ENCODE measurements at regions of chr19 and their contacts with region 1.

Region 1: GRCh38 chr19:38634757-38635482 is 12.5 kb upstream of the ACTN4 start:
- DNase-seq: peak; percentile 38
- H3K4me3 ChIP-seq: no peak overlapping the region
- H3K27ac ChIP-seq: peak overlapping the region; percentile 31
- H3K27me3 ChIP-seq: no peaks in the 10 kb centered on the region
- CTCF ChIP-seq: peak; percentile 94

Region 2: DNA sequence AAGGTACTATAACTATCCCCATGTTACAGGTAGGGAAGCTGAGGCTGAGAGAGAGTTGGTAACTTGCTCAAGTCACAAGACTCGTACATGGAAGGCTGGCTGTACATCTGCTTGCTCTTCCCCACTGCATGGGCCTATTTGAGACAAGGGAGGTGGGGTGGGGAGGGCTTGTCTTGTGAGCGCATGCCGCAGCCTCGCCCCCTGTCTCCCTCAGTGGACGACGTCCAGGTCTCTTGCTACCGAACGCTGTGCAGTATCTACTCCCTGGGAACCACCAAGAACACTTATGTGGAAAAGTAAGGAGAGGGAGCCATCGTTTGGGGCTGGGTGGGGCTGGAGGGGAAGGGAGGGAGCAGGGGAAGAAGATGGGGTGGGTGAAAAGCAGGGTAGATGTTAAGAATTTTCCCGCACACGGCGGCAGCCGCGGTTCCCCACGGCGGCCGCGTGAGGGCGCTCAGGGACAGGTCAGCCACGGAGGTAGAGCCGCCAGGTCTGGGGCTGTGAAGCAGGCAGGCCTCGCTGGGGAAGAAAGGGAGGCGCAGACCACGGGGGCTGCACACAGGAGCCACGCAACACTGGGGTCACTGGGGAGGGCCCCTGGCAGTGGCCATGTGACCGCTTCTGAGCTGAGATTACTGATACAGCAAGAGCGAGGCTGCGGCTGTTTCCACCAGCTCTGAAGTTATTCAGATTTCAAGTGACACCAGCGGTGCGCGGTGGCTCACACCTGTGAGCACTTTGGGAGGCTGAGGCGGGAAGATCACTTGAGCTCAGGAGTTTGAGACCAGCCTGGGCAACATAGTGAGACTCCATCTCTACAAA is 119.9 kb before region 1 on chr19:
- CTCF ChIA-PET with region 1: interaction called, 24 read pairs
- POLR2A ChIA-PET with region 1: interaction called, 10 read pairs
- DNase-seq: peak; percentile 2
- H3K4me3 ChIP-seq: no peak overlapping the region
- H3K27ac ChIP-seq: no peak overlapping the region
- H3K27me3 ChIP-seq: no peaks in the 10 kb centered on the region
- CTCF ChIP-seq: peak; percentile 83

Region 3: DNA sequence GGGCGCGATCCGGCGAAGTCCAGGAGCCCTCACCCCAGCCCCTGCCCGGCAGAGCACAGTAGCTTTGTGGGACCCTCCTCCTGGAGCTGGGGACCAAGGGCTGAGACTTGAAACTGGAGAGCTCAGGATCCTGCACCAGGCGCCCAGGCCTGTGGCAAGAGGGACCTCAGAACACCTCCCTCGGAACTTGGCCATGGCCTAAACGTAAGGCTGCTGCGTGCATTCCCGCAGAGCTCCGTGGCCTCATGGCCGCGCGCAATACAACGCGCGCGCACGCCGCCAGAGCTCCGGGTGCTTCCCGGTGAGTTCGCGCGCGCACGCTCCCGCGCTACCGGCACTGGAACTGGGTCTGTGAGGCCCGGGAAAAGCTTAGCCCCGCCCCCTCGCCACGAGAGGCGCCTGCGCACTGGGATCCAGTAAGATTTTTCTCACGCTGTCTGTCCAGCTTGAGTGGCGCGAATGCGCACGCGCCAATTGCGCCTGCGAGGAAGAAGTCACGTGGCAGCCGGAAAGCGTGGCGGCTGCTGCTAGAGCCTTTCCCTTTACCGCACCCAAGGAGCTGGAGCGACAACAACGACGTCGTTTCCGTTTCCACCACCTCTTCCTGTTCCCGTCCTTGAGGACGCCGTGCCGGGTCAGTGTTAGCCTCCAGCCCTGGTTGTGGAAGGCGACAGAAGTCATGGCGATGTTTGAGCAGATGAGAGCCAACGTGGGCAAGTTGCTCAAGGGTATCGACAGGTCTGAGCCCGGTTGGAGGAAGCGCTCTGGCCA is 16.1 kb before region 1 on chr19 and contains the start of gene EIF3K:
- CTCF ChIA-PET with region 1: interaction called, 19 read pairs
- POLR2A ChIA-PET with region 1: interaction called, 6 read pairs
- DNase-seq: peak; percentile 98
- H3K4me3 ChIP-seq: peak within 1 kb of the TSS; percentile 97
- H3K27ac ChIP-seq: peak within 1 kb of the TSS; percentile 43
- H3K27me3 ChIP-seq: no peaks in the 10 kb centered on the region
- CTCF ChIP-seq: no peak
- polyA plus RNA-seq, gene EIF3K: 168 and 250 TPM in 2 replicates

Region 4: DNA sequence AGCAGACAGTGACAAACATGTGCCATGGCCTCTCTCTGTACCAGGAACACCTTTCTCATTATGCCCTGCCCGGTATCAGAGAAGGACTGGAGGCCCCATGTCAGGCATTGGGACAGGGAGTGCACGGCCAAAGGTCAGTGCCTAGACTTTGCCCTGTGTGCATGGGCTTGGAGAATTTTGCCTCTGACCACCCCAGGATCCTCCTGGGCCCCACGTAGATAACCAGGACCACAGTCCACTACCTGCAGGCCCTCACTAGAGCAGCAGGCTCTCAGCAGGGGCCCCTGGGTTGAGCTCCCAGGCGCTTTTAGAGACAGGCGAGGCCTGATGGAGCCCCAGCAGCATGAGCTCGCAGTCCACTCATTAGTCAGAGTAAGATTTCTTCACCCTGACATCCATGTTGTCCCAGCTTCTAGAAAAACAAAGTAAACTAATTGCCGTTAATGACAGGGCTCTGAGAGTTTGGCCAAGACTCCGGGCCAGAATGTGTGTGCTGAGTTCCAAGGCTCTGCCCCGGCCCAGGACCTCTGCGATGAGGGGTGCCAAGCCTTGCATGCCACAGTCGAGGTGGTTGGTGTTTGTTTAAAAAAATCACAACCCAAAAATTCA is 66.6 kb after region 1 on chr19:
- CTCF ChIA-PET with region 1: no interaction called
- POLR2A ChIA-PET with region 1: no interaction called
- DNase-seq: no peak
- H3K4me3 ChIP-seq: no peak overlapping the region
- H3K27ac ChIP-seq: peak overlapping the region; percentile 57
- H3K27me3 ChIP-seq: no peaks in the 10 kb centered on the region
- CTCF ChIP-seq: no peak

Region 5: GRCh38 chr19:38711726-38712153 is 76.8 kb after region 1 on chr19:
- CTCF ChIA-PET with region 1: interaction called, 13 read pairs
- POLR2A ChIA-PET with region 1: no interaction called
- DNase-seq: peak; percentile 86
- H3K4me3 ChIP-seq: no peak overlapping the region
- H3K27ac ChIP-seq: peak overlapping the region; percentile 83
- H3K27me3 ChIP-seq: no peaks in the 10 kb centered on the region
- CTCF ChIP-seq: peak; percentile 30